ENCODE measurements at regions of chr2 and their contacts with region 1.

Region 1: GRCh38 chr2:3423492-3424175 is 44.1 kb downstream of the TRAPPC12 start:
- DNase-seq: peak; percentile 42 to 84 (median 68)
- ATAC-seq: peak; percentile 74
- H3K4me3 ChIP-seq: no peak overlapping the region
- H3K4me3 Mint-ChIP-seq: no peak overlapping the region
- H3K27ac ChIP-seq: no peak overlapping the region
- H3K27ac Mint-ChIP-seq: peak overlapping the region; percentile 10
- H3K4me1 ChIP-seq: no peaks in the 10 kb centered on the region
- H3K4me1 Mint-ChIP-seq: peaks cover 6% of the 10 kb centered on the region
- H3K27me3 ChIP-seq: no peaks in the 10 kb centered on the region
- H3K27me3 Mint-ChIP-seq: no peaks in the 10 kb centered on the region
- CTCF ChIP-seq: peak; percentile 99

Region 2: DNA sequence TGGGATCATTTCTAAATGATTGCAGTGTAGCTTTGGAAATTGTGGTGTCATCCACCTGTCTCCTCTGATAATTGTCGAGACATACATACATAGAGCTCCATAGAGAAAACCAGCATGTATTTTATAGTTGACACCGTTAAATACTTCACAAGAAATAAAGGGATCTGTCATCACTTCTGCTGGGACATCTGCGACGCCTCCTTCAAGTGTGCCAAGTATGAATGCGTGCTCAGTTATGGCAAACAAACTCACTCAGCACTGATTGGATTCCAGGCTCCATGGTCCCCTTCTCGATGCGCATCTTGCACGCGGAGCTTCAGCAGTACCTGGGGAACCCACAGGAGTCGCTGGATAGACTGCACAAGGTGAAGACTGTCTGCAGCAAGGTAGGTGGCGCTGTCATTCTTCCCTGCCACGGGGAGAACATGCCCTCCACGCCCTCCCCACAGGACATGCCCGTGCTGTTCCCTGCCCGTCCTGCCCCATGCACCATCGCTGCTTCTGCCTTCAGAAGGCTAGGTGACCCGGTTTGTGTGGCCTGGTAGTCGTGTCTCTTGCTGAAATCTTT is 20.0 kb after region 1 on chr2:
- CTCF ChIA-PET with region 1: interaction called, 15 read pairs
- POLR2A ChIA-PET with region 1: no interaction called
- intact Hi-C with region 1: no loop called
- DNase-seq: no peak
- ATAC-seq: no peak
- H3K4me3 ChIP-seq: no peak overlapping the region
- H3K4me3 Mint-ChIP-seq: no peak overlapping the region
- H3K27ac ChIP-seq: no peak overlapping the region
- H3K27ac Mint-ChIP-seq: no peak overlapping the region
- H3K4me1 ChIP-seq: no peaks in the 10 kb centered on the region
- H3K4me1 Mint-ChIP-seq: peaks cover 20% of the 10 kb centered on the region
- H3K27me3 ChIP-seq: no peaks in the 10 kb centered on the region
- H3K27me3 Mint-ChIP-seq: no peaks in the 10 kb centered on the region
- CTCF ChIP-seq: no peak

Region 3: DNA sequence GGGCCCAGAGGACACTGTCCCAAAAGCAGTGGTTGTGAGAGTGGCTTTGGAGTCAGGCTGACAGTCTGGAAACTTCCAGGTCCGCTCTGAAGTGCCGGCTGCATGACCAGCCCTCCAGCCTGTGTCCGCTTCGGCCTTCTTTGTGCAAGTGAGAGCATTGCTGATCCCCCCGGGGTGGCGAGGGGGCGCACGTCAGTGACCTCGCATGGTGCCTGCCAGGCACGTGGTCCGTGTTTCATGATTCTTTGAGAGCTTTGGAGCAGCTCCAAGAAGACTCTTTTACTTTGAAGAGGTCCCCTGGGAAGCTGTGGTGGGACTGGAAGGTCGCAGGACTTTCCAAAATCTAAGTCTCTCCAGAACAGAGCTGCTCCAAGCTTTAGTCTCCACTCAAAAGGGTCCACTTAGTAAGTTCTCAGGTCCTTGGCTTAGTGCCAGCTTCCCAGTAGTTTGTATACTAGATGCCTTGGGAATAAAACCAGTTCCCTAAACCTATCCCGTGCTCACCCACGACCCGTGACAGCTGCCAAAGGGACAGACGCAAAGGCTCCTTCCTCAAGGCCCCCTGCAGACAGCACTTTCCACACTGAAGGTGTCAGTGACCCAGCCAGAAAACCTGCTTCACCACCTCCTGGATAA is 26.9 kb after region 1 on chr2:
- CTCF ChIA-PET with region 1: interaction called, 21 read pairs
- POLR2A ChIA-PET with region 1: no interaction called
- intact Hi-C with region 1: no loop called
- DNase-seq: no peak
- ATAC-seq: no peak
- H3K4me3 ChIP-seq: no peak overlapping the region
- H3K4me3 Mint-ChIP-seq: no peak overlapping the region
- H3K27ac ChIP-seq: no peak overlapping the region
- H3K27ac Mint-ChIP-seq: no peak overlapping the region
- H3K4me1 ChIP-seq: no peaks in the 10 kb centered on the region
- H3K4me1 Mint-ChIP-seq: no peaks in the 10 kb centered on the region
- H3K27me3 ChIP-seq: no peaks in the 10 kb centered on the region
- H3K27me3 Mint-ChIP-seq: no peaks in the 10 kb centered on the region
- CTCF ChIP-seq: no peak

Region 4: DNA sequence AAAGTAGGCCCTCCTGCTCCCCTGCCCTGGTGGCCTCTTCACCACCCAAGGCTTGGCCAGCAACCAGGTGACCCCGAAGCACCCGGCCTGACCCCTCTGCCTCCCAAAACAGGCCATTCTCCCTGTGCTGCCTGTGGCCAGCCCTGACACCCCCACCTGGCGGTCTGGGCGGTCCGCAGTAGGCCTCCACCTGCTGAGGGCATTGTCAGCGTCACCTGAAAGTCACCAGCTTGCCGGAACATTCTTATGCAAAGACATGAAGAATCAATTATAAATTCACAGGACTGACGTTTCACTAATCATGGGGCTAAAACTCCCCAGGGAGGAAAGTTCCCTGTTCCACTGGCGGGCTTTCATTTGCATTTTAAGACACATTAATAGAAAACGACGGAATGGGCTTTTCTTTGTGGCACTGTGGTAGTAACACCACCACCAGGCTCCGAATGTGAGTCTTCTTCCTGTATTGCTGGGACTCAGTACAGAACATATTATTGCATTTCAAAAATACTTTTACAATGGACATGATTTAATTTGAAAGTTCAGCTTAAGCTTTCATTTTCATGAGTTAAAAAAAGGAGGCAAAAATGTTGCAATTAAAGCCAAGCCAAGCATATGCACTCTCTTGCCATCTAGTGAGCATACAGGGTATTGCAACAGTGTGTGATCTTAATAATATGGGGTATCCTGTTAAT is 38.3 kb after region 1 on chr2:
- CTCF ChIA-PET with region 1: interaction called, 28 read pairs
- POLR2A ChIA-PET with region 1: no interaction called
- intact Hi-C with region 1: loop called in 1 of 2 experiments (anchors 2 kb)
- DNase-seq: peak in 5 of 9 experiments; percentile 13 to 70 (median 43)
- ATAC-seq: peak; percentile 91
- H3K4me3 ChIP-seq: no peak overlapping the region
- H3K4me3 Mint-ChIP-seq: no peak overlapping the region
- H3K27ac ChIP-seq: no peak overlapping the region
- H3K27ac Mint-ChIP-seq: peak overlapping the region; percentile 60
- H3K4me1 ChIP-seq: no peaks in the 10 kb centered on the region
- H3K4me1 Mint-ChIP-seq: peaks cover 6% of the 10 kb centered on the region
- H3K27me3 ChIP-seq: no peaks in the 10 kb centered on the region
- H3K27me3 Mint-ChIP-seq: no peaks in the 10 kb centered on the region
- CTCF ChIP-seq: peak; percentile 98

Region 5: GRCh38 chr2:3476321-3476980 is 52.8 kb after region 1 on chr2:
- CTCF ChIA-PET with region 1: no interaction called
- POLR2A ChIA-PET with region 1: no interaction called
- intact Hi-C with region 1: no loop called
- DNase-seq: no peak
- ATAC-seq: no peak
- H3K4me3 ChIP-seq: no peak overlapping the region
- H3K4me3 Mint-ChIP-seq: no peak overlapping the region
- H3K27ac ChIP-seq: no peak overlapping the region
- H3K27ac Mint-ChIP-seq: no peak overlapping the region
- H3K4me1 ChIP-seq: no peaks in the 10 kb centered on the region
- H3K4me1 Mint-ChIP-seq: peaks cover 5% of the 10 kb centered on the region
- H3K27me3 ChIP-seq: no peaks in the 10 kb centered on the region
- H3K27me3 Mint-ChIP-seq: no peaks in the 10 kb centered on the region
- CTCF ChIP-seq: no peak

Region 6: GRCh38 chr2:3617198-3617890 is 193.7 kb after region 1 on chr2:
- CTCF ChIA-PET with region 1: no interaction called
- POLR2A ChIA-PET with region 1: no interaction called
- intact Hi-C with region 1: no loop called
- DNase-seq: peak in 1 of 9 experiments; percentile 9
- ATAC-seq: no peak
- H3K4me3 ChIP-seq: no peak overlapping the region
- H3K4me3 Mint-ChIP-seq: no peak overlapping the region
- H3K27ac ChIP-seq: no peak overlapping the region
- H3K27ac Mint-ChIP-seq: no peak overlapping the region
- H3K4me1 ChIP-seq: no peaks in the 10 kb centered on the region
- H3K4me1 Mint-ChIP-seq: no peaks in the 10 kb centered on the region
- H3K27me3 ChIP-seq: no peaks in the 10 kb centered on the region
- H3K27me3 Mint-ChIP-seq: peaks cover 1% of the 10 kb centered on the region
- CTCF ChIP-seq: no peak

Region 7: DNA sequence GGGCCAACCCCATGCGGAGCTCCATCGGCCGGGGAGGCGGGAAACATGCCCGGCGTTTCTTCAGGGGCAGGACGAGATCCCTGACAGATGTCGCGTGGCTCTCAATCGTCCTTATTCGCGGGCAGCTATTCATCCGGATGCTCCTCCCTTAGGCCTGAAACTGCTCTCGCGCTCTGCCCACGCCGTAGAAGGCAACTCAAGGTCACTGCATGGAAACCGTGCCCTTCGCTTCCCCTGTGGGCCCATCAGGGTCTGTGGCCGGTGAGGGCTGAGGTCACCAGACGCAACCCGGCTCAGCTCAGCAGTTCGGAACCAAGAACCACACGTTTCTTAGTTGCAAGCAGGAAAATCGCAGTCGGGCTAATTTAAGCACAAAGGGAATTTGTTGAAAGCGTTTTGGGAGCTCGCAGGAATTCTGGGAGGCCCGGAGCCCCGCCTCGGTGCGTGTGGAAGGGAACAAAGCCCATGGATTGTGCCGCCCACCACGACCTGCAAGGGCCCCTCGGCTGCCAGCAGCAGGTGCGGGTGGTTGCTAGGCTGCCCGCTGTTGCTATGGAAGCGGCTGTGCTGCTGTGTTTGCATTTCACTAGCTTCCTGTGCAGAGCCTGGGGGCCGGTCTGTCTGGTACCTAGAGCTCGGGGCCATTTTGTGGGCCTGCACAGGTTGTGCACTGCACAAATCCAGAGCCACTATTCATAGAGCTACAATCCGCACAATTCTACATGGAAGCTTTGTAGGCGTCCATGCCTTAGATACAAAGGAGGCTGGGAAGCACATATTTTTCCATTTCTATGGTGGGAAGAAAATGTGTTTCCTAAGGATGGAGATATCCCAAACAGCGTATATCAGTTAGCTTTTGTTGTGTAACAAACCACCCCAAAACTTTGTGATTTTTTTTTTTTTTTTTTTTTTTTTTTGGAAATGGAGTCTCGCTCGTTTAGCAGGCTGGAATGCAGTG is 228.3 kb after region 1 on chr2:
- CTCF ChIA-PET with region 1: interaction called, 41 read pairs
- POLR2A ChIA-PET with region 1: no interaction called
- intact Hi-C with region 1: loop called in 1 of 2 experiments (anchors 1 kb)
- DNase-seq: peak; percentile 45 to 80 (median 69)
- ATAC-seq: peak; percentile 61
- H3K4me3 ChIP-seq: peak overlapping the region; percentile 47 to 58
- H3K4me3 Mint-ChIP-seq: peak overlapping the region; percentile 86
- H3K27ac ChIP-seq: peak overlapping the region in 1 of 2 experiments; percentile 68
- H3K27ac Mint-ChIP-seq: peak overlapping the region; percentile 64
- H3K4me1 ChIP-seq: no peaks in the 10 kb centered on the region
- H3K4me1 Mint-ChIP-seq: peaks cover 6% of the 10 kb centered on the region
- H3K27me3 ChIP-seq: no peaks in the 10 kb centered on the region
- H3K27me3 Mint-ChIP-seq: peaks cover 5% of the 10 kb centered on the region
- CTCF ChIP-seq: no peak

Region 8: GRCh38 chr2:3823748-3824147 is 400.1 kb after region 1 on chr2:
- CTCF ChIA-PET with region 1: no interaction called
- POLR2A ChIA-PET with region 1: no interaction called
- intact Hi-C with region 1: no loop called
- DNase-seq: no peak
- ATAC-seq: no peak
- H3K4me3 ChIP-seq: no peak overlapping the region
- H3K4me3 Mint-ChIP-seq: no peak overlapping the region
- H3K27ac ChIP-seq: no peak overlapping the region
- H3K27ac Mint-ChIP-seq: no peak overlapping the region
- H3K4me1 ChIP-seq: no peaks in the 10 kb centered on the region
- H3K4me1 Mint-ChIP-seq: no peaks in the 10 kb centered on the region
- H3K27me3 ChIP-seq: no peaks in the 10 kb centered on the region
- H3K27me3 Mint-ChIP-seq: no peaks in the 10 kb centered on the region
- CTCF ChIP-seq: no peak

Measured in CD8-positive, alpha-beta T cell (primary cell).